ENCODE measurements at regions of chr10 and their contacts with region 1.

Region 1: GRCh38 chr10:70093335-70093944 is 39.2 kb downstream of the AIFM2 start:
- DNase-seq: no peak
- H3K4me3 ChIP-seq: no peak overlapping the region
- H3K27ac ChIP-seq: no peak overlapping the region
- H3K4me1 ChIP-seq: no peaks in the 10 kb centered on the region
- H3K27me3 ChIP-seq: 0 out of 2 replicates have a peak, but pooled peaks cover 4% of the 10 kb centered on the region
- CTCF ChIP-seq: no peak

Region 2: GRCh38 chr10:70034232-70034631 is 59.2 kb before region 1 on chr10:
- CTCF ChIA-PET with region 1: no interaction called
- POLR2A ChIA-PET with region 1: interaction called, 10 read pairs
- intact Hi-C with region 1: no loop called
- DNase-seq: no peak
- H3K4me3 ChIP-seq: no peak overlapping the region
- H3K27ac ChIP-seq: no peak overlapping the region
- H3K4me1 ChIP-seq: no peaks in the 10 kb centered on the region
- H3K27me3 ChIP-seq: peaks cover 57% of the 10 kb centered on the region
- CTCF ChIP-seq: no peak

Region 3: GRCh38 chr10:70255329-70256299 is 162.2 kb after region 1 on chr10:
- CTCF ChIA-PET with region 1: no interaction called
- POLR2A ChIA-PET with region 1: no interaction called
- intact Hi-C with region 1: no loop called
- DNase-seq: peak; percentile 88 to 94
- H3K4me3 ChIP-seq: no peak overlapping the region
- H3K27ac ChIP-seq: no peak overlapping the region; the same call in 1 of the 2 replicates
- H3K4me1 ChIP-seq: peaks cover 57% of the 10 kb centered on the region
- H3K27me3 ChIP-seq: no peaks in the 10 kb centered on the region
- CTCF ChIP-seq: no peak

Region 4: GRCh38 chr10:70742537-70743429 is 649.3 kb after region 1 on chr10:
- CTCF ChIA-PET with region 1: no interaction called
- POLR2A ChIA-PET with region 1: no interaction called
- intact Hi-C with region 1: no loop called
- DNase-seq: no peak
- H3K4me3 ChIP-seq: no peak overlapping the region
- H3K27ac ChIP-seq: no peak overlapping the region
- H3K4me1 ChIP-seq: no peaks in the 10 kb centered on the region
- H3K27me3 ChIP-seq: no peaks in the 10 kb centered on the region
- CTCF ChIP-seq: no peak